ENCODE measurements at regions of chr11 and their contacts with region 1.

Region 1: GRCh38 chr11:101456812-101457211 is 127.0 kb downstream of the TRPC6 start:
- DNase-seq: no peak
- H3K4me3 ChIP-seq: no peak overlapping the region
- H3K27ac ChIP-seq: no peak overlapping the region
- H3K4me1 ChIP-seq: no peaks in the 10 kb centered on the region
- H3K27me3 ChIP-seq: no peaks in the 10 kb centered on the region
- CTCF ChIP-seq: no peak
- EP300 ChIP-seq: no peak
- POLR2A ChIP-seq: no peak

Region 2: GRCh38 chr11:101848262-101848661 is 391.4 kb after region 1 on chr11:
- intact Hi-C with region 1: loop called in 2 of 4 experiments (anchors 5 to 10 kb)
- DNase-seq: no peak
- H3K4me3 ChIP-seq: no peak overlapping the region
- H3K27ac ChIP-seq: no peak overlapping the region
- H3K4me1 ChIP-seq: no peaks in the 10 kb centered on the region
- H3K27me3 ChIP-seq: no peaks in the 10 kb centered on the region
- CTCF ChIP-seq: peak in 1 of 3 donors; percentile 17
- EP300 ChIP-seq: no peak
- POLR2A ChIP-seq: no peak